ENCODE measurements at regions of chr2 and their contacts with region 1.

Region 1: DNA sequence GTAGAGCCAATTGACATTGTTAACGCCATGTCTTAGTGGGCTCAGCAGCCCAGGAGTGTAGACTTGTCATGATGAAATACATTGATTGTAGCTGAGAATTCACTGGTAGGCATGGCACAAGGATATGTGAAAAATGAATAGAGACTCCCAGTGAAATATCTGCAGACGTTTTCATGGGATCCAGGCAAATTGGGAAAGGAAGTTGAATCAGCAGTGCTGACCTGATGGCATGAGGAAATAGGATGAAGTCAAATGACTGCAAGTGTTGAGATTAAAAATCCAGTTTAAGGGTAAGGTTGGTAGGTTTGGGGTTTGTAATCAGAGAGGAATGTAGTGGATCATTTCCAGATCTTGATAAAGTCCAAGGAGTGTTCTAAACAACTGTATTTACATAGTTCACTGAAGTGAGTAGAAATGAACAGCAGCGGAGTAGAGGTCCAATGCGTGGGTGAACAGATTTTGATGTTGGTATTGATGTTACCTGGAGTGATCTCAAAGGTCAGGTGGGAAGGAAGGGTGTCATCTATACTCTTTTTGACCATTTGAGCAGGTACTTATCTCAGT is 24.6 kb downstream of the INSIG2 start:
- DNase-seq: peak; percentile 51
- H3K4me3 Mint-ChIP-seq: peak overlapping the region; percentile 21
- H3K27ac Mint-ChIP-seq: peak overlapping the region; percentile 94
- H3K4me1 Mint-ChIP-seq: peaks cover 67% of the 10 kb centered on the region
- H3K27me3 Mint-ChIP-seq: no peaks in the 10 kb centered on the region
- CTCF ChIP-seq: no peak

Region 2: GRCh38 chr2:117745537-117745936 is 367.3 kb before region 1 on chr2:
- CTCF ChIA-PET with region 1: no interaction called
- intact Hi-C with region 1: no loop called
- DNase-seq: no peak
- H3K4me3 Mint-ChIP-seq: no peak overlapping the region
- H3K27ac Mint-ChIP-seq: no peak overlapping the region
- H3K4me1 Mint-ChIP-seq: no peaks in the 10 kb centered on the region
- H3K27me3 Mint-ChIP-seq: no peaks in the 10 kb centered on the region
- CTCF ChIP-seq: no peak

Region 3: DNA sequence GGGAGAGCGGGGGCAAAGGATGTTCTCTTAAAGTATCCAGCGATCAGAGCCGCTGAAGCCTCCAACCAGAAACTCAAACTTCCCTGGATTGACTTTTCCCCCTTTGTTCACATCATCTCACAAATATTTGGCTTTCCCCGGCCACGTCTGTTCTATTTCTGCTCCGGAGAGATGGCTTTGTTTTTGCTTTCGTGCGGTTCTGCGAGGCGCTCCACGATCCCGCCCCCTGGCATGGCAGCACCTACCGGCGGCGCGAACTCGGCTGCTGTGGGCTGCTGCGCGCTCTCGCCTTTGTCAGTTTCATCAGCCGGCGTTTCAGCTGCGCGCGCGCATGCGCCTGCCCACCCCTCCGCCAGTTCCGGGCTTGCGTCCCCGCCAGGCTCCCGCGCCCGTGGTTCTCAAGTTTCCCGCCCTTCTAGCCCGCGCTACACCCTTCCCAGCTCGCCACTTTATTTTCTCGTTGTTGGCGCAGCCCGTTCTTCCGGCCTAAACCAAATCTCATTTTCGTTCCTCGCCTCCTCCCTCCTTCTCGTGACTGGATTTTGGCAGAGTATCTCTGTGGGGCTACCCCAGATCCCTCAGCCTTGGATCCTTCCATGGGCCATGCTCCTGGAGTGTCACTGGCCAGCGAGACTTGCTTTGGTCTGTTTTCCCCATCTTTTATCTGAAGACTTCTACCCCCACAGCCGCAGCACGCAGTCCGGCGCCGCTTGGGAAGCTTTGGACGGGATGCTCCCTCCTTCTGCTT is 73.4 kb after region 1 on chr2:
- CTCF ChIA-PET with region 1: no interaction called
- intact Hi-C with region 1: loop called (anchors 2 kb)
- DNase-seq: peak; percentile 90
- H3K4me3 Mint-ChIP-seq: peak overlapping the region; percentile 85
- H3K27ac Mint-ChIP-seq: peak overlapping the region; percentile 91
- H3K4me1 Mint-ChIP-seq: peaks cover 43% of the 10 kb centered on the region
- H3K27me3 Mint-ChIP-seq: no peaks in the 10 kb centered on the region
- CTCF ChIP-seq: no peak

Measured in Calu3 (cell line).